ENCODE measurements at regions of chr11 and their contacts with region 1.

Region 1: DNA sequence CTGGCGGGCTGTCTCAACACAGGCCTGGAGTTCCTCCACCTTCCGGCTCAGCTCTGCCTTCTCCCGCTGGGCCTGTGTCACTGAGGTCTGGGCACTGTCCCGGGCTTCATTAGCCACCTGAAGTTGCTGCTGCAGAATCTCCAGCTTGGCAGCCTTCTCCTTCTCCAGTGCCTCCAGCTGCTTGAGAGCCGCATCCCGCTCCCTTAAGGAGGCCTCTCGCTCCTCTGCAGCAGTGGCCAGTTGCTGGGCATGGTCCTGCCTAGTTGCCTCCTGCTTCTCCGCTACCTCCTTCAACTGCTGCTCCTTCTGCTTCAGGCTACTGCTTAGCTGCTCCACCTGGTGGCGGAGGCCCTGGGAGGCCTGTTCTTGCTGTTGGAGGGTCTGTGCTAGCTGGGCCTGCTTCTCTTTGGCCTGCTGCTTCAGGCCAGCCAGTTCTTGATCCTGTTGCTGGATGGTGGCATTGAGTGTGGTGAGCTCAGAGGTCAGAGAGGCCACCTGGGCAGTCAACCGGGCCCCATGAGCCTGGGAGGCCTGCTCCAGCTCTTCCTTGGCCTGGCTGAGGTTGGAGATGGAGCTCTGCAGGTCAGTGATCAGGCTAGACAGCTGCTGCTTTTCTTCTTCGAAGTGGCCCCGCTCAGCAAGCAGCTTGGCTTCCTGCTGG is 16.9 kb downstream of the IL18BP start:
- DNase-seq: peak; percentile 45 to 61 (median 60)
- H3K4me3 ChIP-seq: no peak overlapping the region
- H3K27ac ChIP-seq: no peak overlapping the region
- H3K4me1 ChIP-seq: no peaks in the 10 kb centered on the region
- H3K27me3 ChIP-seq: no peaks in the 10 kb centered on the region

Region 2: GRCh38 chr11:71977743-71978418 is 37.8 kb before region 1 on chr11:
- CTCF ChIA-PET with region 1: interaction called, 130 read pairs
- POLR2A ChIA-PET with region 1: no interaction called
- DNase-seq: peak; percentile 68 to 92 (median 88)
- H3K4me3 ChIP-seq: no peak overlapping the region
- H3K27ac ChIP-seq: peak overlapping the region in 1 of 2 experiments; percentile 35
- H3K4me1 ChIP-seq: peaks cover 10 to 25% (median 21%) of the 10 kb centered on the region in 4 experiments
- H3K27me3 ChIP-seq: no peaks in the 10 kb centered on the region

Region 3: GRCh38 chr11:71986131-71986530 is 29.5 kb before region 1 on chr11:
- CTCF ChIA-PET with region 1: interaction called, 23 read pairs
- POLR2A ChIA-PET with region 1: no interaction called
- DNase-seq: peak in 2 of 3 donors; percentile 50 to 64
- H3K4me3 ChIP-seq: no peak overlapping the region
- H3K27ac ChIP-seq: peak overlapping the region in 1 of 2 experiments; percentile 37
- H3K4me1 ChIP-seq: peaks cover 0 to 17% (median 11%) of the 10 kb centered on the region in 4 experiments
- H3K27me3 ChIP-seq: no peaks in the 10 kb centered on the region

Region 4: DNA sequence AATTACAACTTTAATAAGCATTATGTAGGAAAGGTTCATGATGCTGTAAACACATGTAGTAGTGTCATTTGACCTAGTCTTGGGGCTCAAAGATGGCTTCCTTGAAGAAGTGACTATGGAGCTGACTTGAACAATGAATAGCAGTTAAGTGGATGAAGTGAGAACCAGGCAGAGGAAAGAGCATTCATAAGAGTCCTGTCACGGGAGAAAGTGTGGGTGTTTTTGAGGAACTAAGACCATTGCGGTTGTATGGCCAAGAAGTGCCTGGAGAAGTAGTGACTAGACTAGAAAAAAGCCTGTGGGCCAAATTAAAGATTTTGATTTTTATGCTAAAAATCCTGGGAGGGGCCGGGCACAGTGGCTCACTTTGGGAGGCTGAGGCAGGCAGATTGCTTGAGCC is 24.1 kb before region 1 on chr11:
- CTCF ChIA-PET with region 1: interaction called, 110 read pairs
- POLR2A ChIA-PET with region 1: no interaction called
- DNase-seq: peak; percentile 66 to 93 (median 90)
- H3K4me3 ChIP-seq: no peak overlapping the region
- H3K27ac ChIP-seq: no peak overlapping the region
- H3K4me1 ChIP-seq: peaks cover 0 to 20% (median 9%) of the 10 kb centered on the region in 4 experiments
- H3K27me3 ChIP-seq: no peaks in the 10 kb centered on the region

Region 5: DNA sequence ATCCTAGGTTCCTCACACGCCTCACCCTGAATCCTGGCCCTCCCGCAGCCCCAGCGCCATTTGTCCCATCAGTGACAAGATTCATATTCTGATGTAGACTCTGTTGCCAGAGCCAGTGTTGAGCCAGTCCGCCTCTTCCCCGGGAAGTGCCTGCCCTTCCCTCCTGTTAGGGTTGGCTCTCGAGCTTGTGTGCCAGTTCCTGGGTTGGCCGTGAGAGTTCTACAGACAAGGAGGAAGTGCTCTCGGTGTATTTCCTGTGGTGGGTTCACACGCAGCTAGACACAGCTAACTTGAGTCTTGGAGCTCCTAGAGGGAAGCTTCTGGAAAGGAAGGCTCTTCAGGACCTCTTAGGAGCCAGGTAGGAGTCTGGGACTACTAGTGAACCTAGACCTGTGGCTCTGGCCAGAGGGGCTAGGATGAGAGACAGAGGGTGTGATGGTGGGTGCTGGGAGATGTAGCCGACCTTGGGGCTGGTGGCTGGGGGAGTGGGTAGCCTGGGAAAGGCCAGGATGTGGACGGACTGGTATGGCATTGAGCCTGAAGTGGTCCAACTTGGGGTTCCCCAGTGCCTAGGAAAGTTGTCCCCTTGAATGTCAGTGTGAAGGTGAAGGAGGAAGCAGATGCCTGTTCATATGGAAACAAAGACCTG is 16.9 kb before region 1 on chr11 and contains the start of gene IL18BP:
- CTCF ChIA-PET with region 1: interaction called, 110 read pairs
- POLR2A ChIA-PET with region 1: no interaction called
- DNase-seq: peak; percentile 29 to 66 (median 55)
- H3K4me3 ChIP-seq: peak within 1 kb of the TSS in 1 of 7 experiments; percentile 1
- H3K27ac ChIP-seq: no peak within 1 kb of the TSS
- H3K4me1 ChIP-seq: peaks cover 0 to 18% (median 14%) of the 10 kb centered on the region in 4 experiments
- H3K27me3 ChIP-seq: no peaks in the 10 kb centered on the region

Region 6: GRCh38 chr11:72102946-72103753 is 87.5 kb after region 1 on chr11 and contains the start of gene LAMTOR1:
- CTCF ChIA-PET with region 1: interaction called, 394 read pairs
- POLR2A ChIA-PET with region 1: no interaction called
- DNase-seq: peak; percentile 99 to 100 (median 100)
- H3K4me3 ChIP-seq: peak within 1 kb of the TSS; percentile 72 to 94 (median 87)
- H3K27ac ChIP-seq: peak within 1 kb of the TSS; percentile 95 to 96
- H3K4me1 ChIP-seq: peaks cover 36 to 54% (median 51%) of the 10 kb centered on the region in 4 experiments
- H3K27me3 ChIP-seq: no peaks in the 10 kb centered on the region

Region 7: DNA sequence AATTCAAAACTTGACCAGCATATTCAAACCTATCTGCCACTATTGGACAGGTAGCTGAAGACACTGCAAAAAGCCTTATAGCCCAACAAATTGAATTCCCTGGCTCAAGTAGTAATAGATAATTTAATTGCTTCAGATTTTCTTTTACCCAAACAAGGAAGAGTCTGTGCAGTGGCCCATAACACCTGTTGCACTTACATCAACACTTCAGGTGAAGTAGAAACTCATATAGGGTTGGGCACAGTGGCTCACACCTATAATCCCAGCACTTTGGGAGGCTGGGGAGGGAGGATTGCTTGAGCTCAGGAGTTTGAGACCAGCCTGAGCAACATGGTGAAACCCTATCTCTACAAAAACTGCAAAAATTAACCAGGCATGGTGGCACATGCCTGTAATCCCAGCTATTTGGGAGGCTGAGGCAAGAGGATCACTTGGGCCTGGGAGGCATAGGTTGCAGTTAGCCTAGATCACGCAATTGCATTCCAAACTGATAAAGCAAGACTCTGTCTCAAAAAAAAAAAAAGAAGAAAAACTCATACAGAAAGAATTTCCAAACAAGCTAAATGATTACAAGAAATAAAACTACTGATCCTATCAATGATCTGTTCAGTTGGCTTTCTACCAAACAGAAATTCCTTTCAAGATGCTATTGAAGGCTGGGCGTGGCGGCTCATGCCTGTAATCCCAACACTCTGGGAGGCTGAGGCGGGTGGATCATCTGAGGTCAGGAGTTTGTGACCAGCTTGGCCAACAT is 129.3 kb after region 1 on chr11:
- CTCF ChIA-PET with region 1: interaction called, 12 read pairs
- POLR2A ChIA-PET with region 1: no interaction called
- DNase-seq: no peak
- H3K4me3 ChIP-seq: no peak overlapping the region
- H3K27ac ChIP-seq: no peak overlapping the region
- H3K4me1 ChIP-seq: peaks cover 0 to 4% (median 2%) of the 10 kb centered on the region in 4 experiments
- H3K27me3 ChIP-seq: no peaks in the 10 kb centered on the region

Region 8: GRCh38 chr11:72173291-72173690 is 157.7 kb after region 1 on chr11:
- CTCF ChIA-PET with region 1: no interaction called
- POLR2A ChIA-PET with region 1: no interaction called
- DNase-seq: no peak
- H3K4me3 ChIP-seq: no peak overlapping the region
- H3K27ac ChIP-seq: no peak overlapping the region
- H3K4me1 ChIP-seq: no peaks in the 10 kb centered on the region
- H3K27me3 ChIP-seq: no peaks in the 10 kb centered on the region

Measured in common myeloid progenitor, CD34-positive (primary cell).